Sciatic nerve (tissue), 2 donors: ENCODE measurements at regions of chr22 and their contacts with region 1.

Region 1: GRCh38 chr22:44729391-44730021 is 22.9 kb upstream of the ARHGAP8 start:
- DNase-seq: peak; percentile 82
- ATAC-seq: peak; percentile 90

Region 2: DNA sequence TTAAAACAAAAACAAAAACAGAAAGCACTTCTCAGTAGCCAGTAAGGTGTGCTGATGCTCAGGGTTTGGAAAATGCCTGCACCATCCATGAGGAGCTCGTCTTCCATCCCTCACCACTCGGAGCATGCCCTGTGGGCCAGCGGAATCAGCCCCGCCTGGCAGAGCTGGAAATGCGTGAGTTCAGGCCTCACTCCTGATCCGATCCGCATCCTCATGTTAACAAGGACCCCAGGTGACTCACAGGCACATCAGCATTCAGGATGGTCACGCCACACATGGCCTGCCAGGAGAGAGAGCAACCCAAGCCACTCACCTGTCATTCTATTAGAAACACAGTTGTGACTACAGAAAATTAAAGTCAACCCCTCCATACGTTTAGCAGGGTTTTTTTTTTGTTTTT is 1129.2 kb before region 1 on chr22:
- intact Hi-C with region 1: loop called (anchors 5 kb)
- DNase-seq: no peak
- ATAC-seq: no peak

Region 3: GRCh38 chr22:44862981-44863736 is 133.7 kb after region 1 on chr22:
- intact Hi-C with region 1: no loop called
- DNase-seq: no peak
- ATAC-seq: no peak